H1 (cell line): ENCODE measurements at regions of chr11 and their contacts with region 1.

Region 1: DNA sequence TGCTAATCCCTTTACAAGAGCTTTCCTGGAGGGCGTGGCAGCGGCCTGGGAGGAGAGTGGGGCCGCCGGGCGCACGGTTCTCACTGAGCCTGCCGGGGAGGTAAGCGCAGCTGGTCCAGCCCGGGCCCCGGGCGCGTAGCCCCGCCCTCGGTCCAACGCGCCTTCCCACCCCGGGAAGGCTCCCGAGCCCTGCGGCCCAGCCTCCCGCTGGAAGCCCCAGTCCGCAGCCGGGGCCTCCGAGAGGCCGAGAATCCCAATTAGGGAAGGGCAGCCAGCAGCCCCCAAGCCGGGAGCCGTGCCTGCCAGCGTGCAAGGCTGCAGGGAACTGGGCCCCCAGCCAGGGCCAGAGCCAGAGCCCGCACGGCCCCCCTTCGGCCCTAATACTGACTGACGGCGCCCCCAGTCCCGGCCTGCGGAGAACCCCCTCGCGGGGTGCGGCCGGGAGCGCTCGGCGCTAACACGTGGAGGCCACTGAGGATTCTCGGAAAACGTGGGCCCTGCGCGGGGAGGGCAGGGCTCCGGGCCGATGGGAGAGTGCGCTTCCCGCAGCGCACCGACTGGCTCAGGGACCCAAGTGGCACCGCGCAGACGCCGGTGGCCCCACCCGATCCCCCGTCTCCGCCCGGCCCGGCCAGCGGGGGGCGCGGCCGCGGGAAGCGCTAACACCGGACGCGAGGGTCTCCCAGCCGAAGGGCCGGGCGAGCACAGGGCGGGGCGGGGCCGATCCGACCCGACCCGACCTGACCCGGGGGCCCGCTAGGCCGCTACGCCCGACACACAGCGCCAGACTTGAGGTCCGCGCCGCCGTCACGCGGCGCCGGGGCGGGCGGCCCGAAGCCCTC is 5.7 kb downstream of the ZFTA start:
- DNase-seq: peak in 1 of 2 experiments; percentile 77
- H3K4me3 ChIP-seq: peak overlapping the region; percentile 84 to 96 (median 88)
- H3K27ac ChIP-seq: peak overlapping the region; percentile 78; the same call in 1 of the 2 replicates
- H3K4me1 ChIP-seq: peaks cover 5 to 39% (median 27%) of the 10 kb centered on the region in 4 experiments
- H3K27me3 ChIP-seq: no peaks in the 10 kb centered on the region
- CTCF ChIP-seq: peak in 1 of 3 experiments; percentile 0; a peak in 1 of 4 replicates
- EP300 ChIP-seq: no peak
- POLR2A ChIP-seq: peak in 1 of 2 experiments; percentile 90; a peak in 1 of 3 replicates
- RAD21 ChIP-seq: 0 out of 4 replicates have a peak, but pooled peaks of 1 of the 2 experiments have one; percentile 2

Region 2: DNA sequence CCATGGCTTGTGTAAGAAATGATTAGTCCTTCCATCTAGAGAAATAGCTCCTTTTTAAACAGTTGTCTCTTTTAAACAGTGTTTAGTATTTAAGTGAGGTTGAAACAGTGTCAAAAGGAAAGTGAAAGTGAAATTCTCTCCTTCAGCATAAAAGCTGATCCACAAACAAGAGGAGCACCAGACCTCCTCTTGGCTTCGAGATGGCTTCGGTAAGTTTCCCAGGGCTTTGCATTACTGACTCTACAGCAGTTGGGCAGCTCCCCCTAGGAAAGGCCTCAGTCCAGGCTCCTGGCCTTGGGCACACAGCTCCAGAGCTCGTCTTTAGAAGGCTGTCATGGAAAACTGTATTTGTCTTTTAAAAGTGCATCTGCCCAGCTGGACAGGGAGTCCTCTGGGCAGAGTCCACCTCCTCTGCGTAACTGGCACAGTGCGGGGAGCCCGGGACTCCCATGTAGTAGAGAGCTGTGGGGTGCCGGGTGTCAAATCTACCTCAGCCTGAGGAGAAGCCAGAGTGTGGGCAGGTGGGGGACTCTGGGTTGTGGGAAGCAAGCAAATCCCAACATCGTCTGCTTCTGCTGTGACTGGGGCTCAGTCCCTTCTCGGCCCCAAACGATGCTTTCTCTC is 226.1 kb before region 1 on chr11 and contains the start of gene PLAAT4:
- CTCF ChIA-PET with region 1: no interaction called
- POLR2A ChIA-PET with region 1: no interaction called
- DNase-seq: no peak
- H3K4me3 ChIP-seq: no peak within 1 kb of the TSS
- H3K27ac ChIP-seq: no peak within 1 kb of the TSS
- H3K4me1 ChIP-seq: peaks cover 4 to 13% (median 10%) of the 10 kb centered on the region in 4 experiments; a peak in 6 of 7 replicates
- H3K27me3 ChIP-seq: no peaks in the 10 kb centered on the region
- CTCF ChIP-seq: no peak
- EP300 ChIP-seq: no peak
- POLR2A ChIP-seq: no peak
- RAD21 ChIP-seq: no peak
- total RNA-seq, gene PLAAT4: 2.6 and 2.8 TPM in 2 replicates

Region 3: GRCh38 chr11:63671322-63672155 is 91.3 kb before region 1 on chr11 and contains the start of gene ATL3:
- CTCF ChIA-PET with region 1: interaction called, 3 read pairs
- POLR2A ChIA-PET with region 1: interaction called, 11 read pairs
- DNase-seq: peak; percentile 96 to 98
- H3K4me3 ChIP-seq: peak within 1 kb of the TSS; percentile 45 to 73 (median 62)
- H3K27ac ChIP-seq: peak within 1 kb of the TSS; percentile 64; the same call in 1 of the 2 replicates
- H3K4me1 ChIP-seq: peaks cover 0 to 8% (median 2%) of the 10 kb centered on the region in 4 experiments; a peak in 2 of 7 replicates
- H3K27me3 ChIP-seq: peaks cover 0 to 5% (median 0%) of the 10 kb centered on the region in 4 experiments; a peak in 2 of 7 replicates
- CTCF ChIP-seq: no peak
- EP300 ChIP-seq: peak in 1 of 2 experiments; percentile 56; a peak in 1 of 3 replicates
- POLR2A ChIP-seq: peak in 1 of 2 experiments; percentile 65; a peak in 2 of 3 replicates
- RAD21 ChIP-seq: no peak
- total RNA-seq, gene ATL3: 22.2 and 24.5 TPM in 2 replicates

Region 4: DNA sequence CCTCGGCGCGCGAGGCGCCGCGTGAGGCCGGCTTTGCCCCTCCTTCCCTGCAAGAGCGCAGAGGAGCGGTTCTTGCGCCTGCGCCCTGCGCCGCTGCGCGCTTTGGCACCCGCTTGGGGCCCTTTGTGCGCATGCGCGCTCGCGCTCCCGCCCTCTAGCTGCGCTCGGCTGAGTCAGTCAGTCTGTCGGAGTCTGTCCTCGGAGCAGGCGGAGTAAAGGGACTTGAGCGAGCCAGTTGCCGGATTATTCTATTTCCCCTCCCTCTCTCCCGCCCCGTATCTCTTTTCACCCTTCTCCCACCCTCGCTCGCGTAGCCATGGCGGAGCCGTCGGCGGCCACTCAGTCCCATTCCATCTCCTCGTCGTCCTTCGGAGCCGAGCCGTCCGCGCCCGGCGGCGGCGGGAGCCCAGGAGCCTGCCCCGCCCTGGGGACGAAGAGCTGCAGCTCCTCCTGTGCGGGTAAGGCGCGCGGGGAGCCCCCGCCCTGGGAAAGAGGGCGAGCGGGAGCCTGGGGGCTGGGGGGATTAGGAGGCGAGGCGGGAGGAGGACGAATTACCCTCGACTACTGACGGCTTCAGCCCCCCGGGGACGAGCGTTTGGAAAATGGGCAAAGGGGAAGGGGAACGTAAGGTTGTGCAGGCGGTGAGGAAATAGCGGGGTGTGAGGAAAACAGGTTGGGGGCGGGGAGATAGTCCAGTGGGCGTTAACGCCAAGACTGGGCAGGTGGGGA is 81.4 kb before region 1 on chr11 and contains the start of gene RTN3:
- CTCF ChIA-PET with region 1: no interaction called
- POLR2A ChIA-PET with region 1: interaction called, 14 read pairs
- DNase-seq: peak; percentile 98 to 99
- H3K4me3 ChIP-seq: peak within 1 kb of the TSS; percentile 71 to 94 (median 89)
- H3K27ac ChIP-seq: peak within 1 kb of the TSS; percentile 68
- H3K4me1 ChIP-seq: peaks cover 0 to 10% (median 5%) of the 10 kb centered on the region in 4 experiments; a peak in 5 of 7 replicates
- H3K27me3 ChIP-seq: no peaks in the 10 kb centered on the region
- CTCF ChIP-seq: no peak; a peak in 1 of 4 replicates
- EP300 ChIP-seq: no peak
- POLR2A ChIP-seq: peak; percentile 80 to 92
- RAD21 ChIP-seq: no peak
- total RNA-seq, gene RTN3: 198 and 203 TPM in 2 replicates

Region 5: GRCh38 chr11:63829823-63830489 is 67.1 kb after region 1 on chr11:
- CTCF ChIA-PET with region 1: interaction called, 7 read pairs
- POLR2A ChIA-PET with region 1: interaction called, 12 read pairs
- DNase-seq: peak in 1 of 2 experiments; percentile 65
- H3K4me3 ChIP-seq: no peak overlapping the region
- H3K27ac ChIP-seq: no peak overlapping the region
- H3K4me1 ChIP-seq: peaks cover 3 to 12% (median 8%) of the 10 kb centered on the region in 4 experiments
- H3K27me3 ChIP-seq: no peaks in the 10 kb centered on the region
- CTCF ChIP-seq: peak; percentile 69 to 85 (median 80)
- EP300 ChIP-seq: no peak
- POLR2A ChIP-seq: no peak
- RAD21 ChIP-seq: peak; percentile 76 to 84